Right ventricle myocardium superior (tissue), 1 donor: ENCODE measurements at regions of chr12 and their contacts with region 1.

Region 1: DNA sequence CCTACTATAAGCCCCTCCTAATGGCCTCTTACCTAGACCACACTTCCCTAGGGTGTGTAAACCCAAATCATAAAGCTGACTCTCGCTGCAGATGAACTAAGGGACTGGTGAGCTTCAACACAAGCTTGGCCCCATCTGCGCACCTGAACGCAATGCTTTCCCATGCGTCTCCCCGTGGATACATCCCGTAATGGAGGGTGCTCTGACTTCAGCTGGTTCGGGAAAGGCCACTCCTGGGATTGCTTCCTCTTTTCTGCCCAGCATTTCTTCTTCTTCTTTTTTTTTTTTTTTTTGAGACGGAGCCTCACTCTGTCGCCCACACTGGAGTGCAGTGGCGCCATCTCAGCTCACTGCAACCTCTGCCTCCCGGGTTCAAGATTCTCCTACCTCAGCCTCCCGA is 27.7 kb upstream of the ETFBKMT start:
- DNase-seq: no peak
- ATAC-seq: no peak

Region 2: DNA sequence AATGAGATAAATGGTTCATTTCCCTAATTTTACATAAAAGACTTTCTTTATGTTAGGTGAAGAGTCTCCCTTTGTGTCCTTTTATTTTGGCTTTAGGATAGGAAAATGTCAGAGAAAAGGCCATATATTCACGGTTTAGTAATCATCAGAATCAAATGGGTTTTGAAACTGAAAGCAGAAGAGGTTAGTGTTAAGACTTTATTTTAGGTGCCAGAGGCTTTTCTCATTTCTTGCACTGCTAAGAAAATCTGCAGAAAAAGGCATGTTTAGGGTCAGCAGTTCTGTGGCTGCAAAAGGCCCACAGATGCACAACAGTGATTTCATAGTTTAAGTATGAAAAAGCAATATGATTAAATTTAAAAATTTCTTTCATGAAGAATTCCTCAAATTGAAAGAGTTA is 225.4 kb before region 1 on chr12:
- intact Hi-C with region 1: loop called (anchors 2 kb)
- DNase-seq: no peak
- ATAC-seq: no peak

Region 3: DNA sequence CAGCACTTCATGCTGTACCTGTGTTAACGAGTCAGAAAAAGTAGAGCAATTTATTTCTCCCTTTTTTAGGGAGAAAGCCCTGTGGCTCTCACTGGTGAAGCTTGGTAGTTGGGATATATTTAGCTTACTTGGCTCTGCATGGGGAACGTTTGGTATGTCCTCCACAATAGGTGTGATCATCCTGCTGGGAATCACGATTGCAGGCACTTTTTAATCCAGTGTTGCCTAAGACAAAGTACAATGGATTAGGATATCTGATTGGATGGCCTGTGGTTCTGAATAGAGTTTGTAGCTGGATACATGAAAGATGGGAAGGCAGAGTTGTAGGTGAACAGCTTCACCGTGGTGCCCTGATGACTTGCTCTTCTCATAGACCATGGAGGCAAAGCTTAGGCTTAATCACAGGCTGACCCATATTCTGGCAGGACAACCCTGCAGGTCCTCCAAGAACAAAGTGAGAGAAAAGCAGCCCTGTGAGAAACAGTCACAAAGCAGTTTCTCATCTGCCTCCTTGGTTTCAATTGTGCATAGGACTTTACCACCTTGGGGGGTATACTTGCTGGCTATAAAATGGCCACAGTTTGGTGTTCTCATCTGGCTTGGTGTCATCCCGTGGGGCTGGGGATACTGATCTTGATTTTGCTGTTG is 334.9 kb after region 1 on chr12:
- intact Hi-C with region 1: no loop called
- DNase-seq: no peak
- ATAC-seq: peak; percentile 80